Activated CD4-positive, alpha-beta T cell treated with anti-CD3 and anti-CD28 coated beads for 36 hours (primary cell): ENCODE measurements at regions of chr1 and their contacts with region 1.

Region 1: DNA sequence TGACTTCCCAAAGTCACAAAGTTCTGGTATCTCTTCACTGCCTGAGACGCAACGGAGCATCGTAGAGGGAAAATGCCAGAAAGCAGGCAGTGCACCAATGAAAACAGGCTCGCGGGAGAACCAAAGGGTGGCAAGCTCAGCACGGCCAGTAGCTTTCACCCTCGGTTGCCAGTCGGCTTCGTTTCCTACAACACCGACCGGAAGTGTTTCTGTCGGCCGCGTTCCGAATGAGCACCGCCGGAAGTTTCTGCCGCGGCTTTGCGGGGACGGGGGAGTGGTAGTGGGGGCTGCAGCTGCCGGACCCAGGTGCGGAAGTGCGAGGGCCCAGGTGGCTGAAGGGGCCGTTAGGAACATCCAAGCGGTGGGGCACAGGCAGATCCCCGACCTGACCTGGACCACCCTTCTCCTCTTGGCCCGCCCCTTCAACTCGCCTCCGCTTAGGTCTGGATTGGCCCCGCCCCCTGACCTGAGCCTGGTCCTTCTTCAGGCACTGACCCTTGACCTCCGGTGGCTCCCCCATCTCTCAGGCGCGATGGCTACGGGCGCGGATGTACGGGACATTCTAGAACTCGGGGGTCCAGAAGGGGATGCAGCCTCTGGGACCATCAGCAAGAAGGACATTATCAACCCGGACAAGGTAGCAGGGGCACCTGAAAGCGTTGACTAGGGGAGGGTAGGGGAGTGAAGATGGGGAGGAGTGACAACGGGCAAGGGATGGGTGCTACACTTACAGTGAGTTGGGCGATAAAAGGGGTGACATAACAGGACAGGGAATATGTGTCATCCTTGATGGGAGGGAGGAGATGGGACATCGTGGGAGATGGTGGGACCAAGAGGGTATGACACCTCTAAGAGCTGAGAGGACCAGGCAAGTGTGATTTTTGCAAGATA is at the start of gene DMAP1:
- DNase-seq: peak; percentile 91
- ATAC-seq: peak; percentile 92
- H3K4me3 Mint-ChIP-seq: peak within 1 kb of the TSS; percentile 94
- H3K27ac Mint-ChIP-seq: peak within 1 kb of the TSS; percentile 93
- H3K4me1 Mint-ChIP-seq: peaks cover 33% of the 10 kb centered on the region
- H3K27me3 Mint-ChIP-seq: no peaks in the 10 kb centered on the region
- total RNA-seq, gene DMAP1: 30.2 to 34.8 TPM

Region 2: GRCh38 chr1:43650310-43651085 is 563.0 kb before region 1 on chr1:
- CTCF ChIA-PET with region 1: no interaction called
- POLR2A ChIA-PET with region 1: interaction called, 3 read pairs
- intact Hi-C with region 1: loop called in 1 of 2 experiments (anchors 2 kb)
- DNase-seq: peak; percentile 95
- ATAC-seq: peak; percentile 81
- H3K4me3 Mint-ChIP-seq: peak overlapping the region; percentile 89
- H3K27ac Mint-ChIP-seq: peak overlapping the region; percentile 97
- H3K4me1 Mint-ChIP-seq: peaks cover 31% of the 10 kb centered on the region
- H3K27me3 Mint-ChIP-seq: no peaks in the 10 kb centered on the region

Region 3: DNA sequence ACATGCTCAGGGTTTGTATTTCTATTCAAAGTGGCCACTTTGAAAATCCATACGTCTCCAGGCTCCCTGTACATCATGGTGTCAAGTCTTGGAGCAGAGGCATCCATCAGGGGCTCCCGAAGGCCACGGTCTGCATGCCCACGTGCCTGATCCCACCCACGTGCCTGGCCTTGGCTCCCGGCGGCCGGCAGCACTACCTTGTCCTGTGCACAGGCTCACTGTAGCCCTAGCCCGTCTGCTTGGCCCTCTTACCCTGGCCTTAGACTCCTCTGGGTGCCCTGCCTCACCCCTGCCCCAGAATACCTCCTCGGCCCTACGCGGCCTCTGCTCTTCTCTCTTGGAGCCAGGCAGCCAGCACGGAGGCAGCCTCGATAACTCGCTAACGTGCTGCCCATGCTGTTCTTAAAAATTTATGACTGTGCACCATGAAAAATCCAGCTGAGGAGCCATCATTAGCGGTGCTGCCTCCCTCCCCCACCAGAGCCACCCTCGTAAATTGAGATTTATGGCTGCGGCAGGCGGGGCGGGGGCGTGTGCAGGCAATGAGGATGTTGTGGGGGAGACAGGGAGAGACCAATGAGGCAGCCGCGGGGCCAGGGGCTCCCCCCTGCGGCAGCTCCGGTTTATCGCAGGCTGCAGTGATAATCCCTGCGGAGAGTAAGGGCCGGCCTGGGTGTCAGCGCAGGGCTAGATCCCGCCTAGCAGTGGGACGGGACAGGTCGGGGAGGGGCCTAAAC is 24.4 kb after region 1 on chr1:
- CTCF ChIA-PET with region 1: interaction called, 15 read pairs
- POLR2A ChIA-PET with region 1: no interaction called
- intact Hi-C with region 1: loop called in 1 of 2 experiments (anchors 2 kb)
- DNase-seq: peak; percentile 74
- ATAC-seq: peak; percentile 88
- H3K4me3 Mint-ChIP-seq: no peak overlapping the region
- H3K27ac Mint-ChIP-seq: no peak overlapping the region
- H3K4me1 Mint-ChIP-seq: peaks cover 10% of the 10 kb centered on the region
- H3K27me3 Mint-ChIP-seq: no peaks in the 10 kb centered on the region

Region 4: DNA sequence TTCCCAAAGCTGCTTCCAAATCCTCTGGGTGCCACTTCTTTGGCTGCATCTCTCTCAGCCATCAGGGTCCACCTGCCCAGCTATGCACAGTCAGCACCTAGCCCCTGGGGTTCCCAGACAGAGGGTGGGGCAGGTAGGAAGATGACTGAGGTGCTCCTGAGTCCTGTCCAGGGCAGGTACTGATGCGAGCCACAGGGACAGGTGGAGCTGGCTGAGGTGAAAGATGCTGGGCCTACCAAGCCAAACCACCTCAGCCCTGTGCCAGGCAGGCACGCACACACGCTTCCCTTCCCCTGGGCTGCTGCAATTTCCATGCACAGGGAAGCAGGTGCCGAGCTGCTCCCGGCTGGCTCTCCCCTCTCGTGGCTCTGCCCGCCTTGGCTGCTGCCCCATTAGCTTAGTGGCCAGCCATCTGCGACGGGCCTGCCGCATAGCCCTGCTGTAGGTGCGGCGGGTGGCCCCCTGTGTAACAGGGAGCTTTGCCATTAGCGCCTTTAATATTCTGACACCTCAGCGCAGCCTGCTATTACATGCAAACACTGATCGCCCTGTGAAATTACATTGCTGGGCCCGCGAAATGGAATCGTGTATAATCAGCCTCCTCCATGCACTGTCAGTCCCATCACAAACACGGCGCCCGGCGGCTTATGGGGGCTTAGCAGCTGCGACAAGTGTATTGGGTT is 38.7 kb after region 1 on chr1:
- CTCF ChIA-PET with region 1: no interaction called
- POLR2A ChIA-PET with region 1: no interaction called
- intact Hi-C with region 1: no loop called
- DNase-seq: no peak
- ATAC-seq: no peak
- H3K4me3 Mint-ChIP-seq: no peak overlapping the region
- H3K27ac Mint-ChIP-seq: no peak overlapping the region
- H3K4me1 Mint-ChIP-seq: no peaks in the 10 kb centered on the region
- H3K27me3 Mint-ChIP-seq: no peaks in the 10 kb centered on the region

Region 5: DNA sequence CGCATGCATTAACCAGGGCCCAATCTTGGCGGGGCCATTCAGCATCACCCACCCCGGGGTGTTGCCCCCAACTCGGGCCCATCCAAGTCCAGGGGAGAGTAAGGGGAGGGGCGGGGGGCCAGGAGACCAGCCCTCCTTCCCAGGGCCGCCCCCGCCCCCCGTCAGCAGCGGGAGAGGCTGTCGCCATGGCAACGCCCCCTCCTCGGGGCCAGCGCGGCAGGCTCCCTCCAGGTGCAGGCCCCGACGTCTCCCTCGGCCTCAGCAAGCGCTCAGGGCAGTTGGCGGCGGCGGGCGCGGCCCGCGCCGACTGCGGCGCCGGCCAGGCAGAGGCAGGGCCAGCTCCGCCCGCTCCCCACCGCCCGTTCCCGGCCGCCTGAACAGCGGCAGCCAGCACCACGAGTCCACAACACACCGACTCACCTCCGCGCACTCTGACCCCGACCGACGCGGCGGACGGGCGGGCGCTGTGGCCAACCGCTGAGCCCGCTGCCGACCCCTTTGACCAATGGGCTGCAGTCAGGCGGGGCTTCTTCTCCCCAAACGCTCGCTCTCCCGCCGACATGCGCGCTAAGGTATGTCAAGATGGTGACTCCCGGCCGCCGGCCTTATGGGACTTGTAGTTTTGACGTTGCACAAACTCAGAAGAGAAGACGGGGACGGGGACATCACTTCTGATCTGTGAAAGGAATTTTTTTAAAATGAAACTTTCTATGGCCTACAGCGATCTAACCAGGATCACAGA is 141.5 kb after region 1 on chr1 and contains the start of gene ERI3:
- CTCF ChIA-PET with region 1: interaction called, 4 read pairs
- POLR2A ChIA-PET with region 1: interaction called, 3 read pairs
- intact Hi-C with region 1: loop called in 1 of 2 experiments (anchors 1 kb)
- DNase-seq: peak; percentile 98
- ATAC-seq: peak; percentile 100
- H3K4me3 Mint-ChIP-seq: peak within 1 kb of the TSS; percentile 90
- H3K27ac Mint-ChIP-seq: peak within 1 kb of the TSS; percentile 82
- H3K4me1 Mint-ChIP-seq: peaks cover 34% of the 10 kb centered on the region
- H3K27me3 Mint-ChIP-seq: no peaks in the 10 kb centered on the region
- total RNA-seq, gene ERI3: 36.7 to 41.3 TPM

Region 6: GRCh38 chr1:44423591-44424537 is 210.4 kb after region 1 on chr1:
- CTCF ChIA-PET with region 1: no interaction called
- POLR2A ChIA-PET with region 1: no interaction called
- intact Hi-C with region 1: no loop called
- DNase-seq: no peak
- ATAC-seq: no peak
- H3K4me3 Mint-ChIP-seq: no peak overlapping the region
- H3K27ac Mint-ChIP-seq: no peak overlapping the region
- H3K4me1 Mint-ChIP-seq: peaks cover 5% of the 10 kb centered on the region
- H3K27me3 Mint-ChIP-seq: peaks cover 45% of the 10 kb centered on the region

Region 7: DNA sequence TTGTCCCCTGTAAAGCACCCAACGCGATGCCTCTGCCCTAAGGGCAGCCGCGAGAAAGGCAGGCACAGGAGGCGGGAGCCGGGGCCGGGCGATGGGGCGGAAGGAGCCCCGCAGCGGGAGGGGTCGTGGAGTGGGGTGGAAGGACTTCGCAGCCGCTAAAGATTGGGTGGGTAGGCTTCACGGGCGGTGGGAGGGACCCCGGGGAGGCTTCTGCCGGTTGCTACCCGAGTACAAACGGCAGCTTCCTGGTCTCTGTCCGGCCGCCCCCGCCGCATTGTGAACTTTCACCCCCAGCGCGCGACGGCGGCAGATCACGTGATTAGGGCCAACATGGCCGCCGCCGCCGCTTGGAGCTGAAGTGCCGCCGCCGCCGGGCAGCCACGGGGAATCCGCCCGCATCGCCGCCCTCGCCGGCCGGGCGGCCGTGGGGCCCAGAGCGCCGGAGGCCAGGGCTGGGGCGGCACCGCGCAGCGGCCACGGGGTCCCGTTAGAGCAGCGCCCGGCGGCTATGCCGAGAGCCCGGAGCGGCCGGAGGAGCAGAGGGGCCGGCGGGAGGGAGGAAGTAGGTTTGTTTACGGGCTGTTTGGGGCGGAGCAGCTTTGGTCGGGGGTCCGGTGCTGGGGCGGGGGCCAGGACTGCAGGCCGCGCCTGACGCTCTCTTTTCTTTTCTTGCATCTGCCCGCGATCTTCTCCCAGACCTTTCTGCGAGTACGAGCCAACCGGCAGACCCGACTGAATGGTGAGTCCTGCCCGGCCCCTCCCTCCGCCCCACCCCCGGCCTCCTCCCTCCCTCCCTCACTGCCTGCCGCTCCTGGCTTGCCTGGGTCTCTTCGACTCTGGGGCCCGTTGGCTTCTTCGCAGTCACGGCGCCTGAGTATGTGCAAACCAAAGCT is 418.4 kb after region 1 on chr1:
- CTCF ChIA-PET with region 1: interaction called, 3 read pairs
- POLR2A ChIA-PET with region 1: interaction called, 5 read pairs
- intact Hi-C with region 1: loop called in 1 of 2 experiments (anchors 1 kb)
- DNase-seq: peak; percentile 95
- ATAC-seq: peak; percentile 81
- H3K4me3 Mint-ChIP-seq: peak overlapping the region; percentile 86
- H3K27ac Mint-ChIP-seq: peak overlapping the region; percentile 97
- H3K4me1 Mint-ChIP-seq: peaks cover 40% of the 10 kb centered on the region
- H3K27me3 Mint-ChIP-seq: no peaks in the 10 kb centered on the region

Region 8: GRCh38 chr1:44674113-44675000 is 460.9 kb after region 1 on chr1 and contains the starts of genes ARMH1 and TMEM53:
- CTCF ChIA-PET with region 1: no interaction called
- POLR2A ChIA-PET with region 1: no interaction called
- intact Hi-C with region 1: loop called in 1 of 2 experiments (anchors 1 kb)
- DNase-seq: peak; percentile 99
- ATAC-seq: peak; percentile 97
- H3K4me3 Mint-ChIP-seq: peak within 1 kb of the TSS; percentile 78
- H3K27ac Mint-ChIP-seq: peak within 1 kb of the TSS; percentile 84
- H3K4me1 Mint-ChIP-seq: peaks cover 24% of the 10 kb centered on the region
- H3K27me3 Mint-ChIP-seq: no peaks in the 10 kb centered on the region
- total RNA-seq, gene ARMH1: 67.3 to 75.1 TPM
- total RNA-seq, gene TMEM53: 4.3 to 5.5 TPM